Activated CD4-positive, alpha-beta T cell treated with anti-CD3 and anti-CD28 coated beads for 36 hours (primary cell): ENCODE measurements at regions of chr6 and their contacts with region 1.

Region 1: DNA sequence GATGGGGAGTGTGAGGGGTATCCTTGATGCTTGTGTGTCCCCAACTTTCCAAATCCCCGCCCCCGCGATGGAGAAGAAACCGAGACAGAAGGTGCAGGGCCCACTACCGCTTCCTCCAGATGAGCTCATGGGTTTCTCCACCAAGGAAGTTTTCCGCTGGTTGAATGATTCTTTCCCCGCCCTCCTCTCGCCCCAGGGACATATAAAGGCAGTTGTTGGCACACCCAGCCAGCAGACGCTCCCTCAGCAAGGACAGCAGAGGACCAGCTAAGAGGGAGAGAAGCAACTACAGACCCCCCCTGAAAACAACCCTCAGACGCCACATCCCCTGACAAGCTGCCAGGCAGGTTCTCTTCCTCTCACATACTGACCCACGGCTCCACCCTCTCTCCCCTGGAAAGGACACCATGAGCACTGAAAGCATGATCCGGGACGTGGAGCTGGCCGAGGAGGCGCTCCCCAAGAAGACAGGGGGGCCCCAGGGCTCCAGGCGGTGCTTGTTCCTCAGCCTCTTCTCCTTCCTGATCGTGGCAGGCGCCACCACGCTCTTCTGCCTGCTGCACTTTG is at the start of gene TNF:
- DNase-seq: peak; percentile 89
- ATAC-seq: peak; percentile 23
- H3K4me3 Mint-ChIP-seq: peak within 1 kb of the TSS; percentile 97
- H3K27ac Mint-ChIP-seq: peak within 1 kb of the TSS; percentile 98
- H3K4me1 Mint-ChIP-seq: peaks cover 73% of the 10 kb centered on the region
- H3K27me3 Mint-ChIP-seq: no peaks in the 10 kb centered on the region
- total RNA-seq, gene TNF: 82.3 to 93.3 TPM

Region 2: DNA sequence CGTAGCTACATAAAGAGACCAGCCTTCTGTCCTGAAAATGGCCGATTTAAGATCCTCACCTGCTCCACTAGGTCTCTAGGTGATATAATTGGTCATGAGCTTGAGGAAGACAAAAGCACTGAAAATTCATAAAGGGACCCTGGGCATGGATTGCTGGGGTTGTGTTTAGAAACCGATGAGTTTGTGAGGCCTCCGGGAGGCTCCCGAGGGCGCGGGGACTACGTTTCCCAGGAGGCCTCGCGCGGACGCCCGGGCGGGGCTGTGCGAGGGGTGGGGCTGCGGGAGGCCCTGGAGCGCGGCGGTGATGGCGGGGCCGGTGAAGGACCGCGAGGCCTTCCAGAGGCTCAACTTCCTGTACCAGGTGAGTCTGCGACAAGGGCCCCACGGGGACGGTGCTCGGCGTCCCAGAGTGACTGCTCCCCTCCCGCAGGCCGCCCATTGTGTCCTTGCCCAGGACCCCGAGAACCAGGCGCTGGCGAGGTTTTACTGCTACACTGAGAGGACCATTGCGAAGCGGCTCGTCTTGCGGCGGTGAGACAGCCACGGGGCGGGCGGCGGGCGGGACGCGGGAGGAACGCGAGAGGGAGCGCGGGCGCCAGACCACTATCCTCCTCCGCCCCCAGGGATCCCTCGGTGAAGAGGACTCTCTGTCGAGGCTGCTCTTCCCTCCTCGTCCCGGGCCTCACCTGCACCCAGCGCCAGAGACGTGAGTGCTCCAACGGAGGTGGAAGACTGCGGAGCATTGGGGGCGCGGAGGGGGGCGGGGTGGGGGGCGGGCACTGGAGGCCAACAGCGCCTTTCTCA is 1230.3 kb before region 1 on chr6 and contains the start of gene RPP21:
- CTCF ChIA-PET with region 1: no interaction called
- POLR2A ChIA-PET with region 1: no interaction called
- intact Hi-C with region 1: loop called in 1 of 2 experiments (anchors 10 kb)
- DNase-seq: peak; percentile 94
- ATAC-seq: peak; percentile 96
- H3K4me3 Mint-ChIP-seq: peak within 1 kb of the TSS; percentile 85
- H3K27ac Mint-ChIP-seq: peak within 1 kb of the TSS; percentile 84
- H3K4me1 Mint-ChIP-seq: peaks cover 41% of the 10 kb centered on the region
- H3K27me3 Mint-ChIP-seq: peaks cover 2% of the 10 kb centered on the region
- total RNA-seq, gene RPP21: 32.6 to 38.1 TPM

Region 3: DNA sequence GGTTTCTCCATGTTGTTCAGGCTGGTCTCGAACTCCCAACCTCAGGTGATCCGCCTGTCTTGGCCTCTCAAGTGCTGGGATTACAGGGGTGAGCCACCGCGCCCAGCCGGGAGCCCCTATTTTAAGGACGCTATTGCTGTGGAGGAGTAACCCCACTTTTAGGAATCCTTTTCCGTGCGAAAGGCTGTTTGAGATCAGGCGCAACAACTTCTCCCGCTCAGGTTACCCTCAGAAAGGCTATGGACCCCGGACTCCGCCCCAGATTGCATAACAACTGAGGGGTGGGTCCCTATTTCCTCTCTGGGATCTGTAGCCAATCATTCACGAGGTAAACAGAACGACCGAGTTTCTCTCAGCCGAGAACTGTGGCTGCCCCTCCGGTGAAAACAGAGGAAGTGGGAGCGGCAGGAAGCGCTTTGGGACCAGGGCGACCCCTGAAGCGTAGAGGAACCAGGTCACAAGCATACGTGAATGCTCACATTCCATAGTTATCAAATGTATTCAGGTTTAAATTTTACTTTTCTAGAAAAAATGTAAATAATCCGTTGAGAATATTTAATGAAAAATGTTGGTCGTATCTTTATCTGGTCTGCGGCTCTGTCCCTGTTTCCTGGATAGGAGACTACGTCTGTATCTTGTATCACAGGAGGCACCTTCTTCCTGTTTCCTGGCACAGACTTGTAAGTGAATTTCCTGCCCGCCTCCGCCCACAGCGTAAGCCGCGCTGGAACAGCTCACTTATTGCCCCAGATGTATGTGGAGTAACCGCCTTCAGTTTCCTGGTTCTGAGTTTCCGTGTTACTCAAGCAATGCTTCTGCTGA is 1059.3 kb before region 1 on chr6:
- CTCF ChIA-PET with region 1: no interaction called
- POLR2A ChIA-PET with region 1: no interaction called
- intact Hi-C with region 1: loop called in 1 of 2 experiments (anchors 10 kb)
- DNase-seq: peak; percentile 96
- ATAC-seq: peak; percentile 87
- H3K4me3 Mint-ChIP-seq: peak overlapping the region; percentile 74
- H3K27ac Mint-ChIP-seq: peak overlapping the region; percentile 98
- H3K4me1 Mint-ChIP-seq: peaks cover 69% of the 10 kb centered on the region
- H3K27me3 Mint-ChIP-seq: no peaks in the 10 kb centered on the region

Region 4: DNA sequence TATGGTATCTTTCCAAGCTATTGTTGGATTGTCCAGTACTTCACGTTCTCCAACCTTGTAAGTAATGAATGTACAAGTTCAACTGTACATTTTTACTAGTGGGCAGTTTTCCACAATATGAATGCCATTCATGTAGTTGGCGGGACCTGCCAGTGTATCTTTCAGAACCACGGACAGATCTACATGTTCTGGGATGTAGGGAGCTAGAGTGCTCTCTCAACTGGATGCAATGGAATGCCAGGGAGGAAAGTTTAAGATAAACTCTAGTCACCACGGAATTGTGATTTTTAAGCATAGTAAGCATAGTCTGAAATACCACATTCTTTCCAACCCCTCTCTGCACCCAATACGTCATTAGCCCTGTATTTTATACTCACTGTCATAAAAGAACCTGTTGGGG is 282.1 kb before region 1 on chr6:
- CTCF ChIA-PET with region 1: no interaction called
- POLR2A ChIA-PET with region 1: no interaction called
- intact Hi-C with region 1: no loop called
- DNase-seq: no peak
- ATAC-seq: no peak
- H3K4me3 Mint-ChIP-seq: no peak overlapping the region
- H3K27ac Mint-ChIP-seq: no peak overlapping the region
- H3K4me1 Mint-ChIP-seq: no peaks in the 10 kb centered on the region
- H3K27me3 Mint-ChIP-seq: peaks cover 14% of the 10 kb centered on the region

Region 5: GRCh38 chr6:31356946-31357466 is 218.4 kb before region 1 on chr6 and contains the start of gene HLA-B:
- CTCF ChIA-PET with region 1: no interaction called
- POLR2A ChIA-PET with region 1: no interaction called
- intact Hi-C with region 1: loop called in 1 of 2 experiments (anchors 5 kb)
- DNase-seq: peak; percentile 91
- ATAC-seq: peak; percentile 80
- H3K4me3 Mint-ChIP-seq: peak within 1 kb of the TSS; percentile 98
- H3K27ac Mint-ChIP-seq: peak within 1 kb of the TSS; percentile 99
- H3K4me1 Mint-ChIP-seq: peaks cover 56% of the 10 kb centered on the region
- H3K27me3 Mint-ChIP-seq: peaks cover 5% of the 10 kb centered on the region
- total RNA-seq, gene HLA-B: 2,101 to 2,412 TPM

Region 6: GRCh38 chr6:31559958-31560696 is 15.3 kb before region 1 on chr6:
- CTCF ChIA-PET with region 1: interaction called, 873 read pairs
- POLR2A ChIA-PET with region 1: interaction called, 43 read pairs
- intact Hi-C with region 1: loop called (anchors 1 to 2 kb)
- DNase-seq: peak; percentile 80
- ATAC-seq: peak; percentile 72
- H3K4me3 Mint-ChIP-seq: peak overlapping the region; percentile 66
- H3K27ac Mint-ChIP-seq: peak overlapping the region; percentile 92
- H3K4me1 Mint-ChIP-seq: peaks cover 81% of the 10 kb centered on the region
- H3K27me3 Mint-ChIP-seq: peaks cover 3% of the 10 kb centered on the region

Region 7: DNA sequence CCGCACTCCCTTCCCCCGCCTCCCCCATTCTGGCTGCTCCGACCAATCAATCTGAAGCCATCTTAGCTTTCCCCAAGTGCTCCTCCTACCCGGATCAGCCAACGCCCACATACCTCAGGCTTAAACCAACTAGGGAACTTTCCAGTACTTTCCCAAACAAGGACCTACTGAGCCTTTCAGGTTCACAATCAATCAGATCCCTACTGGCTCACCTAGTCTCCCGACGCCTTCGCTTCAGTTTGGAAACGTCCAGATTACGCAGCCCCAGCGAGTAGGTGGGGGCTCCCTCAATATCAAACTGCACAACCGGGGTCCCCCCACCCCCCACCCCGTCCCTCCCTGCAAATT is 239.2 kb after region 1 on chr6:
- CTCF ChIA-PET with region 1: no interaction called
- POLR2A ChIA-PET with region 1: no interaction called
- intact Hi-C with region 1: loop called in 1 of 2 experiments (anchors 5 kb)
- DNase-seq: peak; percentile 83
- ATAC-seq: peak; percentile 40
- H3K4me3 Mint-ChIP-seq: peak overlapping the region; percentile 72
- H3K27ac Mint-ChIP-seq: peak overlapping the region; percentile 79
- H3K4me1 Mint-ChIP-seq: peaks cover 50% of the 10 kb centered on the region
- H3K27me3 Mint-ChIP-seq: no peaks in the 10 kb centered on the region

Region 8: GRCh38 chr6:31822036-31822821 is 246.8 kb after region 1 on chr6:
- CTCF ChIA-PET with region 1: no interaction called
- POLR2A ChIA-PET with region 1: interaction called, 3 read pairs
- intact Hi-C with region 1: loop called in 1 of 2 experiments (anchors 5 kb)
- DNase-seq: peak; percentile 79
- ATAC-seq: peak; percentile 54
- H3K4me3 Mint-ChIP-seq: peak overlapping the region; percentile 89
- H3K27ac Mint-ChIP-seq: peak overlapping the region; percentile 97
- H3K4me1 Mint-ChIP-seq: peaks cover 67% of the 10 kb centered on the region
- H3K27me3 Mint-ChIP-seq: no peaks in the 10 kb centered on the region